Heart left ventricle (tissue), 16 donors: ENCODE measurements at regions of chr11 and their contacts with region 1.

Region 1: GRCh38 chr11:112024773-112025678 is at the start of gene DLAT:
- DNase-seq: peak; percentile 88 to 94 (median 92)
- ATAC-seq: peak; percentile 89 to 94 (median 93)
- H3K4me3 ChIP-seq: peak within 1 kb of the TSS; percentile 66 to 97 (median 88)
- H3K27ac ChIP-seq: peak within 1 kb of the TSS; percentile 85 to 96 (median 92)
- H3K4me1 ChIP-seq: peaks cover 0 to 31% (median 16%) of the 10 kb centered on the region in 12 donors
- H3K27me3 ChIP-seq: no peaks in the 10 kb centered on the region
- CTCF ChIP-seq: no peak
- POLR2A ChIP-seq: peak in 1 of 2 donors; percentile 48
- total RNA-seq, gene DLAT: 110 to 179 (median 160) TPM

Region 2: DNA sequence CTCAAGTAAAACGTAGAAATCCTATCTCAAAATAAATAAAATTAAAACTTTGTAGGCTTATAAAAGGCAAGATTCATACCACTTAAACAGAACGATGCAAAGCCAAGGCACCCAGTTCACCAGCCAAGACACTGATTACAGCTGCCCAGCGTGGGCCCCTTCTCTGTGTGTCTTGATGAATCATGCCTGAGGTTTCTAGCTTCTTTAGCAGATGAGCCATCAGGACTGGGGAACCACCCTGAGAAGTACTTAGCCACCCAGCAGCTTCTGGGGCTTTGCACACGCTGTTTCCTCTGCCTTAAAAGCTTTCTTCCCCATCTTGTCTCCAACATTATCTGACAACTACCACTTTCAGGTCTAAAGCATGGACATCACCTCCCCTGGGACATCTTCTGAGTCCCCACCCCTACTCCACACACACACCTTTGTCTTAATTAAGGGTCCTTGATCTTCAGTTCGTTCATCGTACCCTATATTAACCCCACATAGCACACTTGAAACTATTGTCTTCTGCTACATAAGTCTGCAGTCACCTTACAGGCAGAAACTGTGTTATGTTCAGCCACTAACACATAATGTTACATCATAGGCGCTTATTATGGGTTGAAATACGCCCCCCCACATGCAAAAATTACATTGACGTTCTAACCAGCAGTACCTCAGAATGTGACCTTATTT is 493.2 kb before region 1 on chr11:
- intact Hi-C with region 1: no loop called
- DNase-seq: no peak
- ATAC-seq: no peak
- H3K4me3 ChIP-seq: no peak overlapping the region
- H3K27ac ChIP-seq: no peak overlapping the region
- H3K4me1 ChIP-seq: no peaks in the 10 kb centered on the region
- H3K27me3 ChIP-seq: peaks cover 0 to 11% (median 2%) of the 10 kb centered on the region in 9 donors
- CTCF ChIP-seq: no peak
- POLR2A ChIP-seq: no peak

Region 3: DNA sequence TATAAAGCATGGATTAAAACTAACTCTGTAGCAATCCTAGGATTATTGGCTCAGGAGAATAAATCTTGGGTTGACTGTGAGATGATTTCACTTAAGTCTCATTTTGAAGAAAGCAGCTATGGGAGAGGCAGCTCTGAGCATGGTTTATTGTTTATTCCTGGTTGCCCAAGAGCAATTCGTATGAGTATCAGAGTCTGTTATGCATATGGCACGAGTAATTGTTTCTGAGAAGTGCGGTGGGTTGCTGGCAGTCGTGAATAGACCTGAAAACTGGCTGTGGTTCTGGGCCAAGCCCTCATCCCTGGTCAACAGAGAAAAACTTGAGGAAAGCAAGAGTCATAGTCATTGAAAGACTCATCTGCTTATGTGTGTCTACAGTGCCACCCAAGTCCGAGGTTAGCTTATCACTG is 61.1 kb before region 1 on chr11:
- intact Hi-C with region 1: no loop called
- DNase-seq: no peak
- ATAC-seq: no peak
- H3K4me3 ChIP-seq: no peak overlapping the region
- H3K27ac ChIP-seq: no peak overlapping the region
- H3K4me1 ChIP-seq: peaks cover 0 to 9% (median 0%) of the 10 kb centered on the region in 12 donors
- H3K27me3 ChIP-seq: no peaks in the 10 kb centered on the region
- CTCF ChIP-seq: no peak
- POLR2A ChIP-seq: no peak

Region 4: GRCh38 chr11:112074026-112074811 is 49.2 kb after region 1 on chr11 and contains the start of gene NKAPD1:
- intact Hi-C with region 1: loop called in 1 of 10 experiments (anchors 5 kb)
- DNase-seq: peak; percentile 73 to 79 (median 76)
- ATAC-seq: peak; percentile 83 to 94 (median 94)
- H3K4me3 ChIP-seq: peak within 1 kb of the TSS; percentile 46 to 96 (median 80)
- H3K27ac ChIP-seq: peak within 1 kb of the TSS; percentile 82 to 95 (median 88)
- H3K4me1 ChIP-seq: peaks cover 0 to 25% (median 17%) of the 10 kb centered on the region in 12 donors
- H3K27me3 ChIP-seq: no peaks in the 10 kb centered on the region
- CTCF ChIP-seq: peak in 1 of 12 donors; percentile 13
- POLR2A ChIP-seq: peak in 1 of 2 donors; percentile 36
- total RNA-seq, gene NKAPD1: 5.1 to 12.5 (median 7.6) TPM